A549 (cell line): ENCODE measurements at regions of chr2 and their contacts with region 1.

Region 1: GRCh38 chr2:71157124-71157793 is 26.8 kb downstream of the MPHOSPH10 start:
- DNase-seq: peak; percentile 46 to 63
- ATAC-seq: peak; percentile 83 to 92
- H3K4me3 ChIP-seq: no peak overlapping the region
- H3K27ac ChIP-seq: no peak overlapping the region
- H3K4me1 ChIP-seq: peaks cover 7% of the 10 kb centered on the region; the same call in 2 of the 3 replicates
- CTCF ChIP-seq: peak; percentile 78
- EP300 ChIP-seq: no peak
- POLR2A ChIP-seq: no peak
- RAD21 ChIP-seq: peak; percentile 80 to 87

Region 2: GRCh38 chr2:70686577-70687460 is 470.4 kb before region 1 on chr2:
- CTCF ChIA-PET with region 1: no interaction called
- POLR2A ChIA-PET with region 1: no interaction called
- DNase-seq: peak; percentile 86 to 93
- ATAC-seq: peak; percentile 97 to 100
- H3K4me3 ChIP-seq: no peak overlapping the region
- H3K27ac ChIP-seq: peak overlapping the region; percentile 59 to 80; a peak in 5 of 6 replicates
- H3K4me1 ChIP-seq: peaks cover 7% of the 10 kb centered on the region
- CTCF ChIP-seq: peak; percentile 58
- EP300 ChIP-seq: no peak
- POLR2A ChIP-seq: no peak
- RAD21 ChIP-seq: peak; percentile 39 to 51; a peak in 3 of 5 replicates

Region 3: DNA sequence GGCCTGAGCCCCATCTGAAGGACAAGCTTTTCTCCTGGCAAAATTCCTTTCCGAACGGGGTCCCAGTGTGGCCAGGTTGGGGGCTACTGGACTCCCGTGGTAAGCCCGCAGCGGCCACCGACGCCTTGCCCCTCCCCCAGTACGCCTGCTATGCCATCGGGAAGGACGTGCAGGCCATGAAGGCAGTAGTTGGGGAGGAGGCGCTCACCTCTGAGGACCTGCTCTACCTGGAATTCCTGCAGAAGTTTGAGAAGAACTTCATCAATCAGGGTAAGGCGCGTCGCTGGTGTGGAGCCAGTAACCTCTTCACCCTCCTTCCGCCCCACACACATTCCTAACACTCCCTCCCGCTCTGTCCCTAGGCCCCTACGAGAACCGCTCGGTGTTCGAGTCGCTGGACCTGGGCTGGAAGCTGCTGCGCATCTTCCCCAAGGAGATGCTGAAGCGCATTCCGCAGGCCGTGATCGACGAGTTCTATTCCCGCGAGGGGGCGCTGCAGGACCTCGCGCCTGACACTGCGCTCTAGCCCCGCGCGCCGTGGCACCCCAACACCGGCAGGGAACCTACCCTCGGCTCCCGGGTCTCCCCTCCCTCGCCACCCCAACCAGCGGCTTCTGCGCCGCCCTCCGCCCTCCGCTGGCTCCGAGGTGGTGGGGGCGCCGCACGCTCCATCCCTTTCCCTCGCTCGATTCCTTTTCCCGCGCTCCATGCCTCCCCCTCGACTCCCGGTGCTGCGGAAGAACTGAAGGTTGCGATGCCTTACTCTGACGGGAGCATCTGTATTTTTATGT is 192.5 kb before region 1 on chr2:
- CTCF ChIA-PET with region 1: no interaction called
- POLR2A ChIA-PET with region 1: no interaction called
- DNase-seq: peak; percentile 77 to 80
- ATAC-seq: peak; percentile 69 to 94
- H3K4me3 ChIP-seq: peak overlapping the region; percentile 51
- H3K27ac ChIP-seq: peak overlapping the region in 1 of 2 experiments; percentile 71; a peak in 3 of 6 replicates
- H3K4me1 ChIP-seq: no peaks in the 10 kb centered on the region
- CTCF ChIP-seq: peak; percentile 93
- EP300 ChIP-seq: no peak
- POLR2A ChIP-seq: no peak
- RAD21 ChIP-seq: peak; percentile 62 to 69

Region 4: DNA sequence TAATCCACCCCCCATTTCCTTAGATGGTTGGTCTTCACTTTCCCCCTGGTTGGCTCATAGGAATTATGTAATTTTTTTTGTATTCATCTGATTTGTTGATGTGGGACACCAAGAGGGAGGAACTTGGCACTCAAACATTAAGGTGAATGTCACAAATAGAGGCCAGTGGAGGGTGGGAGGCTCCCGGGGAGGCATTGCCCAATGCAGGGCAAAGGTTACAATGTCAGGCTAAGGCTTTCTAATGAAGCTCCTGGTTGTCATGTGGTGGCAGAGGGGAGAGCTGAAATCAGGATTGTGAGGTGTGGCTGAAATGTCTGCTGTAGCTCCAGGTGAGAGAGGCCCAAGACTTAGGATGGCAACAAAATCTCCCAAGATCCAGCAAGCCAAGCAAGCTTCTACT is 15.8 kb after region 1 on chr2:
- CTCF ChIA-PET with region 1: interaction called, 16 read pairs
- POLR2A ChIA-PET with region 1: no interaction called
- DNase-seq: no peak
- ATAC-seq: no peak
- H3K4me3 ChIP-seq: no peak overlapping the region
- H3K27ac ChIP-seq: no peak overlapping the region
- H3K4me1 ChIP-seq: no peaks in the 10 kb centered on the region
- CTCF ChIP-seq: no peak
- EP300 ChIP-seq: no peak
- POLR2A ChIP-seq: no peak
- RAD21 ChIP-seq: no peak

Region 5: GRCh38 chr2:71190656-71191569 is 33.7 kb after region 1 on chr2:
- CTCF ChIA-PET with region 1: interaction called, 12 read pairs
- POLR2A ChIA-PET with region 1: no interaction called
- DNase-seq: peak in 1 of 2 experiments; percentile 42
- ATAC-seq: peak; percentile 72 to 79
- H3K4me3 ChIP-seq: no peak overlapping the region
- H3K27ac ChIP-seq: no peak overlapping the region
- H3K4me1 ChIP-seq: no peaks in the 10 kb centered on the region
- CTCF ChIP-seq: peak; percentile 55
- EP300 ChIP-seq: no peak
- POLR2A ChIP-seq: no peak
- RAD21 ChIP-seq: peak; percentile 58 to 62; a peak in 4 of 5 replicates

Region 6: DNA sequence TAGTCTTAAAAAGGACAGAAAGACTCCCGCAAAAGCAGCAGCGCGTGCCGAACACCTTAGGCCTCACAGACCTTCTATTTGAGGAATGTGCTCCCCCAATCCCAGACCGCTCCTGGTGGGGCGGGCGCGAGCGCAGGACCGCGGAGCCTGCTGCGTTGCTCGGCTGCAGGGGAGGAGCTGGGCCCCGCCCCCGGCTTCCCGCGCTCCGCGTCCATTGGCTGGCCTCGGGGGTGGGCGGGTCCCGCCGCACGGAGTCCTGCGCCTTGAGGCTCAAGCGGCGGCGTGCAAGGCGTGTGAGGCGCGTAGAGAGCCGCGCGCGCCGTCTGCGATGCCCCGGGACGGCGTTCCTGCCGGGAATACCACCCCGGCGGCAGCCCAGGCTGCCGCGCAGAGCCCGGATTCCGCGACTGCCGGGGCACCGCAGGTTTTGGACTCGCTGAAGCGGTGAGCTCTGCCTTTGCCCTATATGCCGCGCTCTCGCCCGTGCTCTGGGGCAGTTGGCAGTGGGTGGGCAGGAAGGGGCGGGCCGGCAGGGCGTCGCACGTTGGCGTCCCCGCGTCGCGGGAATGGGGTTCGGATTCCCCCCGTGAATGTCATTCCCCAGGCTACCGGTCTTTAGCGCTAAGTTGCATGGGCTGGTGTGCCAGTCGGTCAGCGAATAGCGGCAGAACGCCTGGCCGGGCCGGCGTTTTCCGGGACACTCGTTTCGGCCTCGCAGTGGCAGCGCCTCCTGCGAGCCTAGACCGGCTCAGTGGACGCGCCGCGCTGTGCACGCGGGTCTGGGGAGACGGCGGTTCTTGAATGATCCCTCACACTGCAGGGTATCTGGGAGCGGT is 119.3 kb after region 1 on chr2:
- CTCF ChIA-PET with region 1: interaction called, 18 read pairs
- POLR2A ChIA-PET with region 1: no interaction called
- DNase-seq: peak; percentile 89 to 93
- ATAC-seq: peak; percentile 96 to 98
- H3K4me3 ChIP-seq: peak overlapping the region; percentile 50
- H3K27ac ChIP-seq: peak overlapping the region; percentile 64 to 83
- H3K4me1 ChIP-seq: peaks cover 5% of the 10 kb centered on the region; the same call in 1 of the 3 replicates
- CTCF ChIP-seq: no peak
- EP300 ChIP-seq: no peak
- POLR2A ChIP-seq: peak; percentile 75
- RAD21 ChIP-seq: no peak

Region 7: DNA sequence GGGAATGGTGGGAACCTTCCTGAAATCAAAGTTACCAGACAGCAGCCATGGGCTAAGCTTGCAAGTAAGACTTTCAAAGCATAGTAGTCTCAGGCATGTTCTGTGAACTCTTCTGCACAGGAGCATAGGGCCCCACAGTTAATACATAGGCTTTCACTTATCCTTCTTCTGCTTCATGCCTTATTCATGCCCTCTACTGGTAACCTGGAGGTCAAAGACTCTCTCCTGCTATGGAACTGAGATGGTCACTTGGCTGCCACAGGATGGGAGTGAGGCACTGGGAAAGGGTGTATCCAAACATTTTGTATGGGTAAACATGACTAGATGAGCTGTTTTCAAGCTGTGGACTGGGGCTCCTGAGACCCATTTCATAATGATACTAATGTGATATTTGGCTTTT is 125.2 kb after region 1 on chr2:
- CTCF ChIA-PET with region 1: interaction called, 18 read pairs
- POLR2A ChIA-PET with region 1: no interaction called
- DNase-seq: peak in 1 of 2 experiments; percentile 41
- ATAC-seq: peak; percentile 79 to 89
- H3K4me3 ChIP-seq: no peak overlapping the region
- H3K27ac ChIP-seq: no peak overlapping the region
- H3K4me1 ChIP-seq: peaks cover 5% of the 10 kb centered on the region; the same call in 1 of the 3 replicates
- CTCF ChIP-seq: peak; percentile 36; the same call in 2 of the 3 replicates
- EP300 ChIP-seq: no peak
- POLR2A ChIP-seq: no peak
- RAD21 ChIP-seq: peak; percentile 37 to 54; a peak in 3 of 5 replicates